SK-N-SH (cell line): ENCODE measurements at regions of chr7 and their contacts with region 1.

Region 1: DNA sequence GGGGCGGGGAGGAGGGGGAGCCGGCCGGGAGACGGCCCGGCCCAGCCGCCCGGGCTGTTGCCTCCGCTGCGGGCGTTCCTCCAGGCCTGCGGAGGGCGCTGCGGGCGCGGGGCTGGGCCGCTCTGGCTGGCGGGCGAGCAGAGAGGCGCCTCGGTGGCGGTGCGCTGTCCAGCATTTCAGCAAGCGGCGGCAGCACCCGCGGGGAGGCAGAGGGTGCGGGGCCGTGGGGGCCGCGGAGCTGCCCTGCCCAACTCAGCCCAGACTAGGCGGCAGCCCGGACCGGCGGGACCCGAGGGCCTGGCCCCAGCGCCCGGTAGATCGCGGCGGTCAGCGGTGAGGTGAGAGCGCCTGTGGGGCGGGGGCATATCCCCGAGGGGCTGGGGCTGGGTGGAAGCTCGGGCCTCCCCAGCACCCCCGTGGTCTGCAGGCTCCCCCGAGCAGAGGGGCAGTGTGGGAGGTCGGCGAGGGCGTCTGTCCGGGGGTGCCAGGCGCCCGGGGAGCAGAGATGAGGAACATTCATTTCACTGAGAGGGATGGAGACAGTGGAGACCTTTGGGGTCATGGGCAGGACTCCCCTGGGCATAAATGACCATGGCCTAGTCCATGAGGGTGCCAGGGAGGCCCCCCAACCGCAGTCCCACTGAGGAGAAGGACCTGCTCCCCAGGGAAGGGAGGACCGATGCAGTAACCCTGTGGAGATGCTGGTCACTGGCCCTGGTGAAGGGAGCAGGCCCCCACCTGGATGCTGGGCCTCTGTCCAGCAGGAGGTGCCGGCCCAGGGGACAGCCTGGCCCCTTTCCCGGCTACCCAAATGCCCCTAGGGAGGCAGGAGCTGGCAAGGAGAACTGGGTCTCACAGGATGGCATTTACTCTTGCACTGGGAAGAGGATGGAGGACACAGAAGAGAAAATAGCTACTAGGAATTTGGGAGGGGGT is at the start of gene SRRM3:
- DNase-seq: peak; percentile 98
- H3K4me3 ChIP-seq: peak within 1 kb of the TSS; percentile 35 to 50; a peak in 3 of 4 replicates
- H3K27ac ChIP-seq: peak within 1 kb of the TSS in 1 of 2 experiments; percentile 75; a peak in 2 of 4 replicates
- H3K4me1 ChIP-seq: peaks cover 0 to 27% of the 10 kb centered on the region in 2 experiments; a peak in 1 of 4 replicates
- H3K27me3 ChIP-seq: peaks cover 25% of the 10 kb centered on the region
- CTCF ChIP-seq: peak; percentile 61
- EP300 ChIP-seq: peak in 1 of 2 experiments; percentile 29; a peak in 1 of 4 replicates
- RAD21 ChIP-seq: peak; percentile 24; the same call in 1 of the 2 replicates
- polyA plus RNA-seq, gene SRRM3: 2.5 and 2.7 TPM in 2 replicates

Region 2: GRCh38 chr7:76191783-76192275 is 10.2 kb before region 1 on chr7:
- CTCF ChIA-PET with region 1: interaction called, 72 read pairs
- POLR2A ChIA-PET with region 1: interaction called, 4 read pairs
- DNase-seq: peak; percentile 72
- H3K4me3 ChIP-seq: no peak overlapping the region
- H3K27ac ChIP-seq: no peak overlapping the region
- H3K4me1 ChIP-seq: no peaks in the 10 kb centered on the region
- H3K27me3 ChIP-seq: peaks cover 4% of the 10 kb centered on the region; the same call in 1 of the 2 replicates
- CTCF ChIP-seq: no peak
- EP300 ChIP-seq: no peak
- RAD21 ChIP-seq: no peak

Region 3: DNA sequence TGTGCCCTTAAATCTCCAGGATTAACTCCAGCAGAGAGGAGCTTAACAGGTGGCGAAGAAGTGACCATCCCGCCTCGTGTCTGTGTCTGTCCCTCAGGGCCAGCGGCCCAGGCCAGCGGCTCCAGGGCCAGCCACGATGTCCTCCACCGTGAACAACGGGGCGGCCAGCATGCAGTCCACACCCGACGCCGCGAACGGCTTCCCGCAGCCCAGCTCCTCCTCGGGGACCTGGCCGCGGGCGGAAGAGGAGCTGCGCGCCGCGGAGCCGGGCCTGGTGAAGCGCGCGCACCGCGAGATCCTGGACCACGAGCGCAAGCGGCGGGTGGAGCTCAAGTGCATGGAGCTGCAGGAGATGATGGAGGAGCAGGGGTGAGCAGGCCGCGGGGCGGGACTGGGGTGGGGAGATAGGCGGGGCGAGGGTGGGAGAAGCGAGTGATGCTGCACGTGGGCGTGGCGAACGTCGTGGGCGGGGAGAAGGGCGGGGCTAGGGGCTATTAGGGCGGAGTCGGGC is 33.0 kb after region 1 on chr7:
- CTCF ChIA-PET with region 1: interaction called, 139 read pairs
- POLR2A ChIA-PET with region 1: interaction called, 7 read pairs
- DNase-seq: peak; percentile 100
- H3K4me3 ChIP-seq: peak overlapping the region in 1 of 2 experiments; percentile 19; a peak in 1 of 4 replicates
- H3K27ac ChIP-seq: peak overlapping the region in 1 of 2 experiments; percentile 65; a peak in 2 of 4 replicates
- H3K4me1 ChIP-seq: peaks cover 0 to 8% of the 10 kb centered on the region in 2 experiments; a peak in 1 of 4 replicates
- H3K27me3 ChIP-seq: peaks cover 5% of the 10 kb centered on the region; the same call in 1 of the 2 replicates
- CTCF ChIP-seq: no peak
- EP300 ChIP-seq: no peak
- RAD21 ChIP-seq: no peak

Region 4: DNA sequence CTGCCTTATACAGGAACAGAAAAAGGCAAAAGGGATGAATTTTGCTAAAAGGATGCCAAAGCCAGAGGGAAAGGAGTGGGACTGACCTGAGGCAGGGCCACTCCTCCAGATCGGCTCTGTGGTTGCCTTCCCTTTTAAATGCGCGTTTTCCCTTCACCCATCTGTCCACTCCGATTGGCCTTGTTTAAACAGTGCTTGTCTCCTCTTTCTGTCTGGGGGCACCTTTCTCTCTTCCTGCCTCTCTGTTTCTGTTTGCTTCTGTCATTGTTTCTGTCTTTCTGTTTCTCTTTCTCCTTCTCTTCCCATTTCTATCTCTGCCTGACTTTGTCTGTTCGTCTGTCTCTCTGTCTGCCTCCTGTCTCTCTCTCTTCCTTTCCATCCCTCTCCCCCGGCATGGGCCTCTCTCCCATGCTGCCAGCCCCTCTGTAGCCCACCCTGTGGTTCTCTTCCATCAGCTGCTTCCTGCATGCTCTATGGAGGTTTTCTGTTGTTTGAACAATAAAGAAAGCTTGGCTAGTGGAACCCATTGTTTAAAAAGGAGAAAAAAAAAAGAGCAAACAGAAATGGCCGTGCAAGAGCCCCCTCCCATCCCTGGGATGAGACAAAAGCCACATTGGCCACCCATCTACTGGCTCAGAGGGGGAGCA is 71.0 kb after region 1 on chr7:
- CTCF ChIA-PET with region 1: interaction called, 11 read pairs
- POLR2A ChIA-PET with region 1: no interaction called
- DNase-seq: no peak
- H3K4me3 ChIP-seq: no peak overlapping the region
- H3K27ac ChIP-seq: no peak overlapping the region
- H3K4me1 ChIP-seq: no peaks in the 10 kb centered on the region
- H3K27me3 ChIP-seq: no peaks in the 10 kb centered on the region
- CTCF ChIP-seq: no peak
- EP300 ChIP-seq: no peak
- RAD21 ChIP-seq: no peak

Region 5: GRCh38 chr7:76314042-76314721 is 112.2 kb after region 1 on chr7:
- CTCF ChIA-PET with region 1: interaction called, 21 read pairs
- POLR2A ChIA-PET with region 1: no interaction called
- DNase-seq: peak; percentile 97
- H3K4me3 ChIP-seq: no peak overlapping the region; a peak in 2 of 4 replicates
- H3K27ac ChIP-seq: no peak overlapping the region
- H3K4me1 ChIP-seq: peaks cover 4 to 26% of the 10 kb centered on the region in 2 experiments; a peak in 2 of 4 replicates
- H3K27me3 ChIP-seq: no peaks in the 10 kb centered on the region
- CTCF ChIP-seq: peak; percentile 100
- EP300 ChIP-seq: peak in 1 of 2 experiments; percentile 69; a peak in 3 of 4 replicates
- RAD21 ChIP-seq: peak; percentile 100